HEK293 (cell line): ENCODE measurements at regions of chr2 and their contacts with region 1.

Region 1: DNA sequence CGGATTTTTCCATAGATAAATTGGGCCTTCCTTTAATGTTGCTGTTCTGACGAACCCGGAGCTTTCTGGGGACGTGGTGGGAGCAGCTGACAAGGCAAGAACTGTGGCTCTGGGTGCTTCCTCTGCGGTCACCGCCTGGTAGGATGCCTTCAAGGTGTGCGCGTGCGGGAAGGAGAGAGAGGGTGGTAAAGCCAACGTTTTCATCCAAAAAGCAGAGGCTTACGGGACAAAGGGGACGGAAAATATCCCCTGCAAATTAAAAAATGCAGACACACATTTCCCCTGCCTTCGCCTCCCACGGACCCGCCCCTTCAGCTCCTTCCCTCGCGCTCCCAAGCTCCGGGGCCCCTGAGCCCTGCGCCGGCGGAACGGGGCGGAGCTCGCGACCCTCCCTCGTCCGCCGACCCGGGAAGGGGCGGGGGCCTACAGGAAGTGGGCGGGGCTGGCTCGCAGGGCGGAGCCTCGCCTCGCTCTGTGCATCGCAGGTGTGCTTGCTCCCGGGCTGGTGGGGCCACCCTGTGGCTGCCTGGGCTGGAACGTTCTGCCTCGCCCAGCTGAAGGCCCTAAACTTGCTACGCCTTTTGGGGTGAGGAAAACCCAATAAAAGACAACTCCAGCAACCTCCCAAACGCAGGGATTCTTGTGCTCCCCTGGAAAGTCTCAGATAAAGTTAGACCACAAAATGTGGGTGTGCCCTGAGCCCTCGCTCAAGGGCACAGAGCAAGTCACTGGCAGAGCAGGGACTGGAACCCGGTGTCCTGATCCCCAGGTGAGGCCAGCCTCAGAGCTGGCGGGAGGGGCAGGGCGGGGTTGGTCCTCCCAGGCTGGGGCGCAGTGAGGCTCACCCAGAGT is 25.4 kb upstream of the SLC66A3 start:
- H3K4me3 ChIP-seq: peak overlapping the region; percentile 6; the same call in 1 of the 2 replicates
- H3K27ac ChIP-seq: no peak overlapping the region
- H3K4me1 ChIP-seq: 0 out of 2 replicates have a peak, but pooled peaks cover 3% of the 10 kb centered on the region
- CTCF ChIP-seq: peak; percentile 78

Region 2: DNA sequence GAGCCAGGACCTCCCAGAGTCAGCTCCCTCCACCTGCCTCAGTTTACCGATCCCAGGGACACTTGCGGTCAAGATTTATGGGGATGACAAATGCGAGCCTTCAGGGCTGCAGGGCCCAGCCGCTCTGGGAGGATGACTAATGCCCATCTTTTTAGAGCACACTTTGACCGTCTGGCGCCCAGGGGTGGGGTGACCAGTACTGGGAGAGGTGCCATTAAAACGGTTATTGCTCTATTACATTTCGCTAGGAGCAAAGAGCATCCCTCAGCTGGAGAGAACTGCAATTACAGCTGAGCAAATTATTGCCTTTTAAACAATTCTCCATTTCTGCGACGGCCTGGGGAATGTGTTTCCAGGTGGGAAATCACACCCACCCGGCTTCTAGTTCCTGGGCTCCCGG is 869.7 kb before region 1 on chr2:
- CTCF ChIA-PET with region 1: no interaction called
- POLR2A ChIA-PET with region 1: no interaction called
- H3K4me3 ChIP-seq: no peak overlapping the region
- H3K27ac ChIP-seq: no peak overlapping the region
- H3K4me1 ChIP-seq: no peaks in the 10 kb centered on the region
- CTCF ChIP-seq: no peak

Region 3: GRCh38 chr2:11054783-11055678 is 74.8 kb before region 1 on chr2:
- CTCF ChIA-PET with region 1: no interaction called
- POLR2A ChIA-PET with region 1: no interaction called
- H3K4me3 ChIP-seq: no peak overlapping the region
- H3K27ac ChIP-seq: no peak overlapping the region
- H3K4me1 ChIP-seq: no peaks in the 10 kb centered on the region
- CTCF ChIP-seq: no peak

Region 4: DNA sequence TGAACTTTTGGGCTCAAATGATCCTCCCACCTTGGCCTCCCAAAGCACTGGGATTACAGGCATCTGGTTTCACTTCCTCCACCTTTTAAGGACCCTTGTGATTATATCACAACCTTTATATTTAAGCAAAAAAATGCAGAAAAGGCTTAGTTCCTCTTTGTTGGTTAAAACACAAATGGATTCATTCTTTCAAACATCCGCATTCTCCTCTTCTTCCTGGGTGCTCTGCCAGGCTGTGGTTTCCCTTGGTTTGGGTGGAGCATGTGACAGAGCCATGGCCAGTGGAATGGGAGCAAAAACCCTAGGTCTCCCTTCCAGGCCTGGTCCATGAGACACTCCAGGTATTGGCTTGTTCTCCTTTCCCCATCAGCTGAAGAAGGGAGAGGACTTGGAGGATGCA is 15.5 kb after region 1 on chr2:
- CTCF ChIA-PET with region 1: interaction called, 51 read pairs
- POLR2A ChIA-PET with region 1: interaction called, 3 read pairs
- H3K4me3 ChIP-seq: no peak overlapping the region
- H3K27ac ChIP-seq: no peak overlapping the region
- H3K4me1 ChIP-seq: no peaks in the 10 kb centered on the region
- CTCF ChIP-seq: no peak

Region 5: GRCh38 chr2:11160731-11161455 is 31.1 kb after region 1 on chr2:
- CTCF ChIA-PET with region 1: interaction called, 13 read pairs
- POLR2A ChIA-PET with region 1: no interaction called
- H3K4me3 ChIP-seq: no peak overlapping the region
- H3K27ac ChIP-seq: no peak overlapping the region
- H3K4me1 ChIP-seq: no peaks in the 10 kb centered on the region
- CTCF ChIP-seq: no peak

Region 6: DNA sequence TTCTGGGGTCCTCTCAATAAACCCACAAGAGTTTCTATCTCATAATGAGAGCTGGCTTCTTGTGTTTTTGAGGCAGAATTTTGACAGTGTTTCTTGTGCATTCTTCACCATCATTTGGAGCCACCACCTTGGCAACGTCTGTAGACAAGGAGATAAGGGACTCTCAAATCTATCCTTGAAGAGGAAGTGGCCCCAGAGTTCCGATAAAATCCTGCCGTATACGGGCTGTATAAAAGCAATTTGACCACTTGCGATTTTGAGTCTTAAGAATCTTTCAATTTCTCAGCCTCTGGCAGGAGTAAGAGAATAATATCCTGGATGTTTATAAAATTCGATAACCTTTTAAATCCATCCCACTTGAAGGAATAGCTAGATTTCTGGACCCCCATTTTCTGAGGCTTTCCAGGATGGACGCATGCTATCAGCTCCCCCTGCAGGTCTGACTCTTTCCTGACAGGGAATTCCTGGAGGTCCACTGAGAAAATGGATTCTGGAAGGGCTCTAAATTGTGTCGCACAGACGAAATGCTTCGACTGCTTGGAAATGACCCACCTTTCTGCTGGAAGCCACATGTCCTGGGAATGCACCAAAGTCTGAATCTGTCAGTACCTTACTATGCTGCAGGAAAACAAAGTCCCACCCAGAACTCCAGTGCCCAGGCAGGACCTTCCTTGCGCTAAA is 282.1 kb after region 1 on chr2:
- CTCF ChIA-PET with region 1: interaction called, 97 read pairs
- POLR2A ChIA-PET with region 1: interaction called, 5 read pairs
- H3K4me3 ChIP-seq: no peak overlapping the region
- H3K27ac ChIP-seq: no peak overlapping the region
- H3K4me1 ChIP-seq: no peaks in the 10 kb centered on the region
- CTCF ChIP-seq: peak; percentile 31; the same call in 1 of the 2 replicates

Region 7: GRCh38 chr2:11446733-11447248 is 317.0 kb after region 1 on chr2:
- CTCF ChIA-PET with region 1: interaction called, 32 read pairs
- POLR2A ChIA-PET with region 1: interaction called, 3 read pairs
- H3K4me3 ChIP-seq: no peak overlapping the region
- H3K27ac ChIP-seq: no peak overlapping the region
- H3K4me1 ChIP-seq: no peaks in the 10 kb centered on the region
- CTCF ChIP-seq: peak; percentile 57

Region 8: DNA sequence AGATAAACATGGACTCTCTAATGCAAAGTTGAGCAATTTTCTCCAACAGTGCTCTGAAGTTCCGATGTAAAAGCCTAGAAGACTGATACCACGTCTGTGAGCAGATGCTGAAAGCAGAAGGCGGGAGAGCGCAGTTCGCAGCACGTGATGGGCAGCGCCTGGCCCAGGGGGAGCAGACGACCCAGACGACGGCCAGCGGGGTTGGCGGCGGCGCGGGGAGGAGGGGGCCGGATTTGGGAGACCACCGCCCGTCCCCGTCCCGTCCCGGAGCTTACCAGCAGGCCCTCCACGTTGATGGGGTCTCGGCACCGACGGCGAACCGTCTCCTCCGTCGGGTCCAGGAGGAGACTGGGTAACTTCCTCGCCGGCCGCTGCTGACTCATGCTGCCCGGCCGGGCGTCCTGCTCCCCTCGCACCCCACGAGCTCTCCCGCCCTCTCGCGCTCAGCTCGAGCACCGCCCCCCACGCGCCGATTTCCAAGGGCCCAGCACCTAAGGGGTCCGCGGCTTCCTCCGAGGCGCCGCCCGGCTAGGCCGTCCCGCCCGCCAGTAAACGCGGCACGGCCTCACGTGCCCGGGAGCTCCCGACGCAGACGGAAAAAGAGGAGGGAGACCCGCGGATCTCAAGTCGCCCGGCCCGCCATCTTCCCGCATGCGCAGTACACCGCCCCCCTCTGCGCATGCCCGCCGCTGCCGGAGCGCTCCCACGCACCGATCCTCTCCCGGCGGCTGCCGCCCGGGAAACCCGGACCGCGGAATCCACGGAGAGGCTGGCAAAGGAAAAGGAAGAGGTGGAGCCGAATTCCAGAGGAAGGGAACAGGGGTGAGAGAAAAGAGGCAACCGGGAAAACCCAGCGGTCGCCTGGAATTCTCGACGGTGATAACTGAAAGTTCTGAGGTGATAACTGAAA is 335.9 kb after region 1 on chr2 and contains the start of gene E2F6:
- CTCF ChIA-PET with region 1: interaction called, 12 read pairs
- POLR2A ChIA-PET with region 1: interaction called, 3 read pairs
- H3K4me3 ChIP-seq: peak within 1 kb of the TSS; percentile 57
- H3K27ac ChIP-seq: peak within 1 kb of the TSS; percentile 73
- H3K4me1 ChIP-seq: no peaks in the 10 kb centered on the region
- CTCF ChIP-seq: 0 out of 2 replicates have a peak, but pooled peaks have one; percentile 27